Sigmoid colon (tissue), 7 donors: ENCODE measurements at regions of chr2 and their contacts with region 1.

Region 1: DNA sequence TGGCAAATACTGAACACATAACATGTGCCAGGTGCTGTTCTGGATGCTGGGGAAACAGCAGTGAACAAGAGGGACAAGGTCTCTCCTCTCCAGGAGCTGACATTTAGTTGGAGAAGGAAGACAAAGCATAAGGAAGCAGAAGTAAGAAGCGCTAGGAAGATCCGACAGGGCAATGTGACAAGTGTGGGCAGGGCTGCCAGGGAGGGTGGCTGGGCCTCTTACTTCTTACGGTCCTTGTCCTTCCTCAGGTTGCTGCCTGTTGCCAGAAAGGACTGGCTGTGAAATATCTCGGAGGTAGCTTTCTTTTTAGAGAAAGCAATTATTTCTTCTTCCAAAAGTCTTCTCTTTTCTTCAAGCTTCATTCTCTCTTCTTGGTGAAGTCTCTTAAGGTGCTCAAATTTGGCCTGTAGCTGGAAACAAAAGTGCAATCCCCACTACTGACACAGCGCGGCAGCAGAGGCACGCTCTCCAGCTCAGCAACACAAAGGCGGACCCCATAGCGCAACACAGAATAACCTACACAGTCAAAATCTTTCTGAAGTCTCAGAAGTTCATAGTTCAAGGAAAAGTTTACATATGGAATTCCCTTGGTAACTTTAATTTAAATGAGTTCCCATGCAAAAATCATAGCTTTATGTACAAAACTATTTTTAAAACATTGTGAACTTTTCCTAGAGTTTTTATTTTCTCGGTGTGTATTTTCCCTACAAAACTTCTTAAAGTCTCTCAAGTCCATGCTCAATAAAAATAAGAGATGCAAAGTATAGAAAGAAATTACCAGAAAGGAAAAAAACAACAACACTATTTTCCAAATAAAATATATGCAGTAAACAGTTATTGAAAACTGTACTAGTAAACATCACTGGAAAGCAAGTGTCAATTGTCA is 67.7 kb downstream of the SEPTIN10 start:
- DNase-seq: peak; percentile 84
- H3K4me3 ChIP-seq: no peak overlapping the region
- H3K27ac ChIP-seq: no peak overlapping the region
- H3K4me1 ChIP-seq: peaks cover 0 to 27% (median 5%) of the 10 kb centered on the region in 4 donors
- H3K27me3 ChIP-seq: no peaks in the 10 kb centered on the region
- CTCF ChIP-seq: peak; percentile 89 to 97 (median 95)
- EP300 ChIP-seq: no peak
- POLR2A ChIP-seq: no peak

Region 2: GRCh38 chr2:109230941-109231420 is 315.1 kb before region 1 on chr2:
- intact Hi-C with region 1: no loop called
- DNase-seq: no peak
- H3K4me3 ChIP-seq: no peak overlapping the region
- H3K27ac ChIP-seq: no peak overlapping the region
- H3K4me1 ChIP-seq: peaks cover 0 to 12% (median 11%) of the 10 kb centered on the region in 4 donors
- H3K27me3 ChIP-seq: no peaks in the 10 kb centered on the region
- CTCF ChIP-seq: no peak
- EP300 ChIP-seq: no peak
- POLR2A ChIP-seq: no peak

Region 3: GRCh38 chr2:109594246-109594885 is 48.3 kb after region 1 on chr2:
- intact Hi-C with region 1: loop called (anchors 5 kb)
- DNase-seq: no peak
- H3K4me3 ChIP-seq: no peak overlapping the region
- H3K27ac ChIP-seq: peak overlapping the region in 3 of 4 donors; percentile 19 to 51 (median 41)
- H3K4me1 ChIP-seq: peaks cover 0 to 17% (median 15%) of the 10 kb centered on the region in 4 donors
- H3K27me3 ChIP-seq: no peaks in the 10 kb centered on the region
- CTCF ChIP-seq: no peak
- EP300 ChIP-seq: no peak
- POLR2A ChIP-seq: no peak

Region 4: GRCh38 chr2:109613922-109614714 is 68.0 kb after region 1 on chr2 and contains the starts of genes SEPTIN10 and SOWAHC:
- intact Hi-C with region 1: loop called (anchors 5 kb)
- DNase-seq: peak; percentile 99
- H3K4me3 ChIP-seq: peak within 1 kb of the TSS; percentile 66 to 85 (median 70)
- H3K27ac ChIP-seq: peak within 1 kb of the TSS; percentile 93 to 100 (median 99)
- H3K4me1 ChIP-seq: peaks cover 0 to 63% (median 59%) of the 10 kb centered on the region in 4 donors
- H3K27me3 ChIP-seq: no peaks in the 10 kb centered on the region
- CTCF ChIP-seq: no peak
- EP300 ChIP-seq: peak in 1 of 4 donors; percentile 30
- POLR2A ChIP-seq: peak in 1 of 2 donors; percentile 59
- total RNA-seq, gene SEPTIN10: 122 to 178 (median 161) TPM
- total RNA-seq, gene SOWAHC: 19.4 to 29.3 (median 23.6) TPM

Region 5: GRCh38 chr2:109715313-109715805 is 169.3 kb after region 1 on chr2:
- intact Hi-C with region 1: loop called (anchors 2 kb)
- DNase-seq: peak; percentile 75
- H3K4me3 ChIP-seq: no peak overlapping the region
- H3K27ac ChIP-seq: no peak overlapping the region
- H3K4me1 ChIP-seq: peaks cover 0 to 10% (median 6%) of the 10 kb centered on the region in 4 donors
- H3K27me3 ChIP-seq: no peaks in the 10 kb centered on the region
- CTCF ChIP-seq: peak; percentile 56 to 71 (median 65)
- EP300 ChIP-seq: no peak
- POLR2A ChIP-seq: no peak

Region 6: DNA sequence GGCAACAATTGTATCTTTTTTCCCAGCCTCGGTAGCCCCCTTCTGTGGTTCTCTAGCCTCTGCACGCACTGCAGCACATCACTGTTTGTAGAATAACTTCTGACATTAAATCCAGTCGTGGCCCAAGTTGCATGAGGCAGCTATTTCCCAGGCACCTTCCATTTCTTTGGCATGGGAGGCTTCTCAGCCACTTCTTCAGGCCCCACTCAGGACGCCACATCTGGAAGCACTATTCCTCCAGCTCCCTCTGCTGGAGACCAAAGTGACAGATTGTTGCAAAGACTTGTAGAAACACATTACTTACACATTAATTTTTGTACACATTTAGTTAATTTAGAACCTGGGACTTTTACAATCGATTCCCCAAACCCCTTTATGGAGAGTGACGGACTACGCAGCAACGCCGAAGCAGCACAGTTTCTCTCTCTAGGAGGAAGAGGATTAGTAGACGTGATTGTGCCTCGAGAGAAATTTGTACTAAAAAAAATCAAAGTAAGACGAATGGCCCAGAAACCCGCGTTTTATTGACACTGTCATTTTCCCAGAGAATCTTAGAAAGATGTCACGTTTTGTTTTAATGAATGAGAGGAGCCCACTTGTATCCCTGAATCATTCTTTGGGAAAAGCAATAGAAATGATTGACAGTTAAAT is 190.2 kb after region 1 on chr2:
- intact Hi-C with region 1: loop called (anchors 1 kb)
- DNase-seq: peak; percentile 80
- H3K4me3 ChIP-seq: no peak overlapping the region
- H3K27ac ChIP-seq: no peak overlapping the region
- H3K4me1 ChIP-seq: no peaks in the 10 kb centered on the region
- H3K27me3 ChIP-seq: no peaks in the 10 kb centered on the region
- CTCF ChIP-seq: peak in 3 of 4 experiments; percentile 54 to 69 (median 69)
- EP300 ChIP-seq: no peak
- POLR2A ChIP-seq: no peak